ENCODE measurements at regions of chr1 and their contacts with region 1.

Region 1: GRCh38 chr1:26363549-26364448 is 8.8 kb downstream of the ZNF683 start:
- DNase-seq: peak; percentile 69 to 94 (median 86)
- ATAC-seq: peak; percentile 56
- H3K4me3 ChIP-seq: no peak overlapping the region
- H3K4me3 Mint-ChIP-seq: no peak overlapping the region
- H3K27ac ChIP-seq: no peak overlapping the region
- H3K27ac Mint-ChIP-seq: peak overlapping the region; percentile 66
- H3K4me1 ChIP-seq: peaks cover 56% of the 10 kb centered on the region
- H3K4me1 Mint-ChIP-seq: peaks cover 54% of the 10 kb centered on the region
- H3K27me3 ChIP-seq: peaks cover 0 to 16% of the 10 kb centered on the region in 2 experiments
- H3K27me3 Mint-ChIP-seq: peaks cover 13% of the 10 kb centered on the region
- CTCF ChIP-seq: peak; percentile 97

Region 2: DNA sequence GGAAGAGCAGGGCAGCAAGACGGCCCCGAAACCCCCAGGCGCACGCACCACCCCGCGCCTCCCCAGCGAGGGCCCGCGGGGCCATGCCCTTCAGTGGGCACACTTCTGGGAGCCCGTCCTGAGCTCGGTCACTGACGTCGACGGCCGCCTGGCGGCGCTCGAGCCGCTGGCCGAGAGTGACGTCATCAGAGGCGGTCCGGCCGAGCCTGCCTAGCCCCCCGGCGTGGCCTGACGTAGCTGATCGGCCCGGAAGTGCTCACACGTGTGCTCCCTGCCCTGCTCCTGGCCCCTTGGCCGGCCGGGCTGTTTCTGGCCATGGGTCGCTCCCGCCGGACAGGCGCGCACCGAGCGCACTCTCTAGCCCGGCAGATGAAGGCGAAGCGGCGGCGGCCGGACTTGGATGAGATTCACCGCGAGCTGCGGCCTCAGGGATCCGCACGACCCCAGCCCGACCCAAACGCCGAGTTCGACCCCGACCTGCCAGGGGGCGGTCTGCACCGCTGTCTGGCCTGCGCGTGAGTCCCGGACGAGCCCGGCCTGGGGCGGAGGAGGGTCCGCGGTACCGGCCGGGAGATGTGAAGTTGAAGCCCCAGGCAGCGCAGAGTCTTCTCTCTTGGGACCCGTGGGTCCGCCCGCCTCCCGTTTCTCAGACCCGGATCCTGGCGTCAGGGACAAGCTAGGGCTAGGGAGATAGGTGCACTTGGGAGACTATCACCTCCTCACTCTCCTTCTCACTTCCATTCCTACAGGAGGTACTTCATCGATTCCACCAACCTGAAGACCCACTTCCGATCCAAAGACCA is 193.9 kb before region 1 on chr1 and contains the start of gene ZNF593:
- CTCF ChIA-PET with region 1: interaction called, 19 read pairs
- POLR2A ChIA-PET with region 1: no interaction called
- intact Hi-C with region 1: loop called in 1 of 2 experiments (anchors 2 kb)
- DNase-seq: peak; percentile 69 to 91 (median 85)
- ATAC-seq: peak; percentile 92
- H3K4me3 ChIP-seq: peak within 1 kb of the TSS; percentile 85 to 89
- H3K4me3 Mint-ChIP-seq: peak within 1 kb of the TSS; percentile 87
- H3K27ac ChIP-seq: peak within 1 kb of the TSS; percentile 77 to 78
- H3K27ac Mint-ChIP-seq: peak within 1 kb of the TSS; percentile 88
- H3K4me1 ChIP-seq: peaks cover 11% of the 10 kb centered on the region
- H3K4me1 Mint-ChIP-seq: peaks cover 12% of the 10 kb centered on the region
- H3K27me3 ChIP-seq: no peaks in the 10 kb centered on the region
- H3K27me3 Mint-ChIP-seq: no peaks in the 10 kb centered on the region
- CTCF ChIP-seq: peak; percentile 74
- total RNA-seq, gene ZNF593: 8.1 to 8.8 TPM

Region 3: GRCh38 chr1:26345718-26346549 is 17.9 kb before region 1 on chr1:
- CTCF ChIA-PET with region 1: interaction called, 16 read pairs
- POLR2A ChIA-PET with region 1: no interaction called
- intact Hi-C with region 1: no loop called
- DNase-seq: no peak
- ATAC-seq: no peak
- H3K4me3 ChIP-seq: no peak overlapping the region
- H3K4me3 Mint-ChIP-seq: no peak overlapping the region
- H3K27ac ChIP-seq: no peak overlapping the region
- H3K27ac Mint-ChIP-seq: no peak overlapping the region
- H3K4me1 ChIP-seq: no peaks in the 10 kb centered on the region
- H3K4me1 Mint-ChIP-seq: no peaks in the 10 kb centered on the region
- H3K27me3 ChIP-seq: peaks cover 0 to 2% of the 10 kb centered on the region in 2 experiments
- H3K27me3 Mint-ChIP-seq: no peaks in the 10 kb centered on the region
- CTCF ChIP-seq: no peak

Region 4: DNA sequence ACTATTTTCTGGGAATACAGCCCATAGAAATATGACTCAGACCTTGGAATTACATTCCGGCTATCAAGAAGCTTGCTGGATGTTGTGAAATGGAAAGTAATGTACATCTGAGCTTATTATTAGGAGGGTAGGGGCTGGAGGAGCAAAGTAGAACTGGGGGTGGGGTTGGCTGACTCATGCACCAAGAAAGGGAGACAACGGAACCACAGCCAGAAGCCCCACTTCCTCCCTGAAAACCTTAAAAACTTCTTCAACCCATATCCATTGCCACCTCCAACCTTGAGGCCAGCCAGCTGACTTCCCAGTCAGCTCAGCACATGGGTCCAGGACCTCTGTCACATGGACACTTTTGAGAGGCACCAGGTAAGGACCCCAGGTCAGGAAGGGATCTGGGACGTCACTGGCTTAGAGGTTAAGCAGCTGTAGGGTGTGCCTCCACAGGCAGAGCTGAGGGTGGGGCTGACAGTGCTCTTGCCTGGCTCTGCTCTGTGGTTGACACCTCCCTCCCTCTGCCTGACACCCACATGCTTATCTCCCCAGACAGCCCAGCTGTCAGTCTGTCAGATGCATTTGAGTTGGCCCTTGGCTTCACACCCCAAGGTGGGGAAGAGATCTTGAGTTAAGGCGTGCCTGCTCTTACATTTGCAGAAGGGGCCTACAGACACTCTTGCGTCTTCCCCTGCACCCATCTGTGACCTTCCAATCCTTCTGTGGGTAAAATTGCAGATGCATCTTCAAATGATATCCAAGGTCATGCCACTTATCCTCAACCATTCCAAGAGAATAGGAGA is 14.5 kb after region 1 on chr1:
- CTCF ChIA-PET with region 1: interaction called, 114 read pairs
- POLR2A ChIA-PET with region 1: interaction called, 17 read pairs
- intact Hi-C with region 1: loop called in 1 of 2 experiments (anchors 1 kb)
- DNase-seq: peak; percentile 63 to 96 (median 85)
- ATAC-seq: peak; percentile 91
- H3K4me3 ChIP-seq: peak overlapping the region; percentile 7 to 19
- H3K4me3 Mint-ChIP-seq: peak overlapping the region; percentile 59
- H3K27ac ChIP-seq: peak overlapping the region; percentile 54 to 76
- H3K27ac Mint-ChIP-seq: peak overlapping the region; percentile 91
- H3K4me1 ChIP-seq: peaks cover 65% of the 10 kb centered on the region
- H3K4me1 Mint-ChIP-seq: peaks cover 68% of the 10 kb centered on the region
- H3K27me3 ChIP-seq: no peaks in the 10 kb centered on the region
- H3K27me3 Mint-ChIP-seq: no peaks in the 10 kb centered on the region
- CTCF ChIP-seq: no peak

Region 5: DNA sequence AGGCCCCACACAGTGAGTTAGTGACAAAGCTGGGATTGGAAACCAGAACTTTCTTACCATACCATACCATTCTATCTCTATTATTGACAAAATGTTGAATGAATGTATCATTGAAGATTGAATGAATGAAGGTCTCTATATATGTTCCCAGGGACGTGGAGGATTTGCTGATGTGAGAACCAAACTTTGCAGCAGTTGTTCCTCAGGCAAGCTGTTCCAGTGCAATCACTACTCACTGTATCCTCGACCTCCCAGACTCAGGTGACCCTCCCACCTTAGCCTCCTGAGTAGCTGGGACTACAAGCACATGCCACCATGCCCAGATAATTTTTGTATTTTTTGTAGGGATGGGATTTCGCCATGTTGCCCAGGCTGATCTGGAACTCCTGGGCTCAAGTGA is 35.2 kb after region 1 on chr1:
- CTCF ChIA-PET with region 1: interaction called, 32 read pairs
- POLR2A ChIA-PET with region 1: no interaction called
- intact Hi-C with region 1: no loop called
- DNase-seq: no peak
- ATAC-seq: no peak
- H3K4me3 ChIP-seq: no peak overlapping the region
- H3K4me3 Mint-ChIP-seq: no peak overlapping the region
- H3K27ac ChIP-seq: no peak overlapping the region
- H3K27ac Mint-ChIP-seq: no peak overlapping the region
- H3K4me1 ChIP-seq: no peaks in the 10 kb centered on the region
- H3K4me1 Mint-ChIP-seq: peaks cover 3% of the 10 kb centered on the region
- H3K27me3 ChIP-seq: peaks cover 0 to 2% of the 10 kb centered on the region in 2 experiments
- H3K27me3 Mint-ChIP-seq: peaks cover 11% of the 10 kb centered on the region
- CTCF ChIP-seq: no peak

Region 6: DNA sequence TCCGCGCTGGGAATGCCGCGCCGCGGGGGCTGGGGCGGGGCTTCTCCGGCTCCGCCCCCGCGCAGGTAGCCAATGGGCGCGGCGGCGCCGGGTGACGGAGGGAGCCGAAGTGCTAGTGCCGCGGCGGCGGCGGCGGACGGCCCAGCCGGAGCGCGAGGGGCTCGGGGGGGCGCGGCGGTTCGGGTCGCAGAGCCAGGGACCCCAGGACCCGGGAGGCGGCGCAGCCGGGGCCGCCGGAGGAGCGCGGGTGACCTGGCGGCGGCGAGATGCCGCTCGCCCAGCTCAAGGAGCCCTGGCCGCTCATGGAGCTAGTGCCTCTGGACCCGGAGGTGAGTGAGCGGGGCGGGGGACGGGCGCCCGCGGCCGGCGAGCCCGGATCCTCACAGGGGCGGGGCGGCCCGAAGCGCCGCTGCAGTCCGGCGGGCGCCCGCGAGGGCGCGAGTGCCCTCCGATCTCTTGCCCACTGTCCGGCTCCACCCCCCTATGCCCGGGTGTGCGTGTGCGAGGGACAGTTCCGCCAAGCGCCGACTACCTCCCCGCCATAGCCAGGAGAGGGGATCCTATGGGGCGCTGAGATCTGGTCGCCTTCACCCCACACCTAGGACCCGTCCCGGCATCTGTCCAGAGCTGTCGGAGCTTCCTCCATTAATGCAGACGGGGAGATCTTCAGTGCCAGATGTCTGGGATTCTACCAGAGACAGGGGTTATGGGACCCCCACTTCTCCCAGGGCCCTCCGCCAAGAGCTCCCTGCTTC is 166.0 kb after region 1 on chr1 and contains the start of gene RPS6KA1:
- CTCF ChIA-PET with region 1: no interaction called
- POLR2A ChIA-PET with region 1: no interaction called
- intact Hi-C with region 1: no loop called
- DNase-seq: peak in 8 of 9 experiments; percentile 45 to 83 (median 60)
- ATAC-seq: peak; percentile 94
- H3K4me3 ChIP-seq: peak within 1 kb of the TSS; percentile 60 to 84
- H3K4me3 Mint-ChIP-seq: peak within 1 kb of the TSS; percentile 89
- H3K27ac ChIP-seq: peak within 1 kb of the TSS in 1 of 2 experiments; percentile 37
- H3K27ac Mint-ChIP-seq: peak within 1 kb of the TSS; percentile 89
- H3K4me1 ChIP-seq: peaks cover 30% of the 10 kb centered on the region
- H3K4me1 Mint-ChIP-seq: peaks cover 34% of the 10 kb centered on the region
- H3K27me3 ChIP-seq: no peaks in the 10 kb centered on the region
- H3K27me3 Mint-ChIP-seq: no peaks in the 10 kb centered on the region
- CTCF ChIP-seq: no peak
- total RNA-seq, gene RPS6KA1: 25.8 to 30.3 TPM